ENCODE measurements at regions of chr9 and their contacts with region 1.

Region 1: DNA sequence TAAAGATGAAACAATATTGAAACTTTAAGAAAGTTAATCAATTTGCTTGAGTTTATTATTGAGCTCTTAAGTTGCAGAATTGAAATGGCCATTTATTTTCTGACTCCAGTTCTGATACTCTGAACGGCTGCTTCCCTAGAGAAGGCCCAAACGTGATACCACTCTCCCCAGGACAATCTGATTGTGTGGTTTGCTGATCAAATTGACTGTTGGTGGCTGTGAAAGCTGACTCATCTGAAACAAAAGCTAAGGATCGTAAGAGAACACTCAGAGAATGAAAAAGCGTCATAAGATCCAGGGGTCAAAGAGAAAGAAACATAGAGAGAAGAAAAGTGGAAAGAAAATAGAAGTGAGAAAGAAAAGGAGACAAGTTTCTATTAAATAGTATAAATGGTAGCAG is 147.2 kb downstream of the IZUMO3 start:
- DNase-seq: no peak
- H3K4me3 ChIP-seq: no peak overlapping the region
- H3K4me3 Mint-ChIP-seq: no peak overlapping the region
- H3K27ac ChIP-seq: no peak overlapping the region
- H3K27ac Mint-ChIP-seq: no peak overlapping the region
- H3K4me1 ChIP-seq: no peaks in the 10 kb centered on the region
- H3K4me1 Mint-ChIP-seq: no peaks in the 10 kb centered on the region
- H3K27me3 ChIP-seq: no peaks in the 10 kb centered on the region
- H3K27me3 Mint-ChIP-seq: peaks cover 0 to 3% (median 0%) of the 10 kb centered on the region in 3 donors
- CTCF ChIP-seq: no peak

Region 2: DNA sequence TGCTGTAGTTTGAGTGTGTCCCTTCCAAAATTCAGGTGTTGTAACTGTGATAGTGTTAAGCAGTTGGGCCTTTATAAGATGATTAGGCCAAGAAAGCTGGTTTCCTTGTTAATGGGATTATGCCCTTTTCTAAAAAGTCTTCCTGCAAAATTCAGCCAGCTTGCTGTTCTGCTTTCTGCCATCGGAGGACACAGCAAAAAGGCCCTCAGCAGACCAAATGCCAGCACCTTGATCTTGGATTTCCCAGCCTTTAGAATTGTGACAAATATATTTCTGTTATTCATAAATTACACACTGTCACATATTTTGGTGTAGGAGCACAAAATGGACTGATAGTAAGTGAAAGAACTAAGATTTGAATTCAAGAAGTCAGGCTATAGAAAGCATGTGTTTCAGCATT is 56.0 kb before region 1 on chr9:
- intact Hi-C with region 1: loop called in 1 of 2 experiments (anchors 10 kb)
- DNase-seq: no peak
- H3K4me3 ChIP-seq: no peak overlapping the region
- H3K4me3 Mint-ChIP-seq: no peak overlapping the region
- H3K27ac ChIP-seq: no peak overlapping the region
- H3K27ac Mint-ChIP-seq: no peak overlapping the region
- H3K4me1 ChIP-seq: no peaks in the 10 kb centered on the region
- H3K4me1 Mint-ChIP-seq: no peaks in the 10 kb centered on the region
- H3K27me3 ChIP-seq: no peaks in the 10 kb centered on the region
- H3K27me3 Mint-ChIP-seq: no peaks in the 10 kb centered on the region
- CTCF ChIP-seq: no peak

Measured in CD14-positive monocyte (primary cell).